ENCODE measurements at regions of chrX and their contacts with region 1.

Region 1: GRCh38 chrX:118239178-118239870 is 106.6 kb upstream of the WDR44 start:
- DNase-seq: no peak
- H3K4me3 Mint-ChIP-seq: no peak overlapping the region
- H3K27ac Mint-ChIP-seq: no peak overlapping the region
- H3K4me1 Mint-ChIP-seq: no peaks in the 10 kb centered on the region
- H3K27me3 Mint-ChIP-seq: no peaks in the 10 kb centered on the region

Region 2: GRCh38 chrX:117996918-117997480 is 242.3 kb before region 1 on chrX:
- CTCF ChIA-PET with region 1: no interaction called
- intact Hi-C with region 1: loop called (anchors 10 kb)
- DNase-seq: no peak
- H3K4me3 Mint-ChIP-seq: no peak overlapping the region
- H3K27ac Mint-ChIP-seq: no peak overlapping the region
- H3K4me1 Mint-ChIP-seq: no peaks in the 10 kb centered on the region
- H3K27me3 Mint-ChIP-seq: no peaks in the 10 kb centered on the region

Measured in activated naive CD4-positive, alpha-beta T cell treated with anti-CD3 and anti-CD28 coated beads for 36 hours (primary cell).